Activated CD4-positive, alpha-beta memory T cell treated with anti-CD3 and anti-CD28 coated beads, Interleukin-2, amount 10 ng/mL, durations not matched to agents 7 days and 5 days (primary cell): ENCODE measurements at regions of chr16 and their contacts with region 1.

Region 1: DNA sequence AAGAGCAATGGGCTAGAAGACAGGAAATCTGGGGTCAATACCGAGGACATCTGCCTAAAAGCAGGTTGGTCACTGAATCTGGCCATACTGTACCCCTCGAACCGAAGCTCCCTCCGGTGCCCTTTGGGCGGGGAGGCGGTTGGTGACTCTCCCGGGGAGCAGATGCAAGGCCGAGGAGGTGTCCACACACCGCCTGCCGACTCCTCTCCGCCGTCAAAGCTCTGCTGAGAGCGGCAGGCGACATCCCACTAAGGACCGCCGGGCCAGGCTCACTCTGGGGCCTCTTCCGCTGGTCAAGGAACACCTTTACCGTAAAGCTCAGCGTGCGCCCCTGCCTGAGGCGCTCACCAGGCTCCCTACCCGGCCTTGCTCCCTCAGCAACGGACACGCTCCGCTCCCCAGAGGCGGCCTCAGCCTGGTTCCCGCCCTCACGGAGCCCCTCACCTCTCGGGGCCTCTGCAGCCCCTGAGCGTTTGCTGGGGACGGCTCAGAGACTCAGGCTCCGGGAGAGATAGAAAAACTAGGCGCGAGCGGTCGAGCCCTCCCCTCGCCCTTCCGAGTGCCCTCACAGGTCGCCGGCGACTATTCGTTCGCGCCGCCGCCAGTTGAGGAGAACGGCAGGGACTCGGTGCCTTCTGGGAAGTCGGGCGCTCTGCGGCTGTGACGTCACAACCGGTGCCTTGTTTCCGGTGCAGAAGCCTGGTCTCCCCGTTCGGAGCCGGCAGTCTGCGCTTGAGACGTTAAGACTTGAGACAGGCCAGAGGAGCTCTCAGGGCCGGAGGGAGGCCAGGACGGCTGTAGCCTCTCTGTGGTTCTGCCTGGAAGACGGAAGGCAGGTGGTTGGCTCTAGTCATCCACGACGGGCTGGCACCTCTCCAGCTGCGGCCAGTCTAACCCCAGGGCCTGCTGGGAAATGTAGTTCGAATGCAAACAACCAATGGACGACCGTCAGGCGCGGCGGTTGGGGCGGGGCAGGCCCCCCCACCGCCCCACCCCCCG is at the start of gene ZNF200:
- DNase-seq: peak; percentile 95
- H3K4me3 Mint-ChIP-seq: peak within 1 kb of the TSS; percentile 83
- H3K27ac Mint-ChIP-seq: peak within 1 kb of the TSS; percentile 97
- H3K4me1 Mint-ChIP-seq: peaks cover 31% of the 10 kb centered on the region
- H3K27me3 Mint-ChIP-seq: no peaks in the 10 kb centered on the region
- total RNA-seq, gene ZNF200: 13.1 to 14.9 TPM

Region 2: DNA sequence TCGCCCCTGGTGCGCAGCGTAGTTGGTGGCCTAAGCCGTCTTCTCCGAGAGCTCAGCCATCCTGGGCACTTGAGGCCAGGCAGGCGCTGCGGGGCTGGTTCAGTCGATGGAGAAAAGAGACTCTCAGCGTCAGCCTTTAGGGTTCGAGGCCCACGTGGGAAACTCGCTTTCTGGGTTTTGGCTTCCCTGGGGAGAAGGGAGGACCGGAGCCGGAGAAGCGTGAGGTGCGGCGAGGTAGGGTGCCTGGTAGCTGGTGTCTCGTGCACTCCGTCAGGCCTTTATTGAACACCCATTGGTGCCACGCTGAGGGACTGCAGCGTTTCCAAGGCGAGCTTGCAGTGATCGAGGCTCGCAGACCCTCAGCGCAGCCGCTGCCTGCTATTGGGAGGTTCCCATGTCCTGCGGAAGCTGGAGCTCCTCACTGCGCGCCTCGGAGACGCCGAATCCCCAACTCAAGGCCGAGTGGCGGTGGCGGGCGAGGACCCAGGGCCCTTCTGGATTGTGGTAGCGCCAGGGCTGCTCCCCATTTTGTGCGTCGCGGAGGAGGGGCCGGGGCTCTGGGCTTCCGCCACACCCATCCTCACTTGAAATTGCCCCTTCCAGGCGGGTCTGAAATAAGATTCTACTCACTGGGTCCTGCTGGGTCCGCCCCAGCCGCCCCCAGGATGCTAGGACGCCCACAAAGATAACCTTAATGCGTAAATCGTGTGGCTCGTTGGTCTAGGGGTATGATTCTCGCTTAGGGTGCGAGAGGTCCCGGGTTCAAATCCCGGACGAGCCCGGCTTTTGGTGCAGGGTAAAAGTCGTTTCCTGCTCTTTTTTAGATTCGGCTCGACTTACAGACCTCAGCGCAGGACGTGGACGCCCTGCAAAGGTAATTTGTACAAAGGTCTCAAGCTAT is 45.7 kb before region 1 on chr16:
- CTCF ChIA-PET with region 1: interaction called, 3 read pairs
- POLR2A ChIA-PET with region 1: interaction called, 10 read pairs
- DNase-seq: peak; percentile 60
- H3K4me3 Mint-ChIP-seq: peak overlapping the region; percentile 71
- H3K27ac Mint-ChIP-seq: peak overlapping the region; percentile 78
- H3K4me1 Mint-ChIP-seq: peaks cover 50% of the 10 kb centered on the region
- H3K27me3 Mint-ChIP-seq: peaks cover 64% of the 10 kb centered on the region

Region 3: GRCh38 chr16:3214904-3215600 is 19.8 kb before region 1 on chr16:
- CTCF ChIA-PET with region 1: no interaction called
- POLR2A ChIA-PET with region 1: interaction called, 17 read pairs
- DNase-seq: peak; percentile 61
- H3K4me3 Mint-ChIP-seq: peak overlapping the region; percentile 35
- H3K27ac Mint-ChIP-seq: peak overlapping the region; percentile 99
- H3K4me1 Mint-ChIP-seq: peaks cover 35% of the 10 kb centered on the region
- H3K27me3 Mint-ChIP-seq: no peaks in the 10 kb centered on the region

Region 4: DNA sequence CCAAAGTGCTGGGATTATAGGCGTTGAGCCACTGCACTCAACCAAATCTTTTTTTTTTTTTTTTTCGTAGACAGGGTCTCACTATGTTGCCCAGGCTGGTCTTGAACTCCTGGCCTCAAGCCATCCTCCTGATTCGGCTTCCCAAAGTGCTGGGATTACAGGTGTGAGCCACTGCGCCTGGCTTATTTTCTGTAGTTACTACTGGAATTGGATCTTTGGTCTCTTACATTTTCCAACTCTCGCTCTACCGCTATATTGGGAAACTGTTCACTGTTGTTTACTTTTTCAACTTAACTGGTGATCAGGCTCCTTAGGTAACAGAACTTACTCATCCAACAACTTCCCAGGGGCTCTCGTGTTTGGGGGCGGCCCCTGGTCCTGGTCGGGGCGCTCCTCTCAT is 14.0 kb before region 1 on chr16:
- CTCF ChIA-PET with region 1: no interaction called
- POLR2A ChIA-PET with region 1: interaction called, 17 read pairs
- DNase-seq: no peak
- H3K4me3 Mint-ChIP-seq: no peak overlapping the region
- H3K27ac Mint-ChIP-seq: no peak overlapping the region
- H3K4me1 Mint-ChIP-seq: peaks cover 17% of the 10 kb centered on the region
- H3K27me3 Mint-ChIP-seq: no peaks in the 10 kb centered on the region

Region 5: DNA sequence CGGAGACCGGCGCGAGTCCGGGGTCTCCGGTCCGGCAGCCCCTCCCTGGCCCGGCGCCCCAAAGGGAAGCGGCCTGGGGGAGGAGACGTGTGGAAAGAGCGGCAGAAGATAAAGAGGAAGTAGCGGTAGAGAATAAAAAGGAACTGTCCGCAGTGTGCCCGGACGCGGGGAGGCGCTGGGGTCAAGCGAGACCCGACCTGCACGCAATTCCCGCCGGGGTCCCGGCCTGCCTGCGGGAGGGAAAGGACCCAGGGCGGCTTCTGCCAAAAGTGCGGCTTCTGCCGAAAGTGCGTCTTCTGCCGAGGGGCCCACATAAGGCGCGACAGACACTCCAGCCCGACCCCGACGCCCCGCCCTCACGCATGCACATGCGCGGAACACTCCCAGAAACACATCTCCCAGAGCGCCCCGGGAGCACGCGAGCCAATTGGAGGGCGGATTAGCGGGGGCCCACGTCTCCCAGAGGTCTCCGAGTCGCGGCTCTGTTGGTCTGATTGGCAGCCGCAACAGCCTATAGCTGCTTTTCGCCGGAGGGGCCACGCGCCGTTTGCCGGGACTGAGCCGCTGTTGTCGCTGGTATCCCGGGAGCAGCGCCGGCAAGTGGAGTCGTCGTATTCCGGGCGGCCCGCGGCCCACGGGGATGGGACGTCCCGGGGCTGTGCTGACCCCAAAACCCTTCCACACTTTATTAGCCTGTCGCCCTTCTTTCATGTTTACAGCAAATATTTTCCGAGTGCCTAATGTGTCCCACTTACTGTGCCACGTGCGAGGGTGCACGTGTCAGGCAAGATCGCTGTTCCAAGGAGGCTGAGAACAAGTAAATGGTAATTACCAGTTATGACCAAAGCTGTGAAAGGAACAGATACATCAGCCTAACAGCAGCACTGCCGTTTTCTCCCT is 29.5 kb after region 1 on chr16:
- CTCF ChIA-PET with region 1: no interaction called
- POLR2A ChIA-PET with region 1: interaction called, 28 read pairs
- DNase-seq: peak; percentile 96
- H3K4me3 Mint-ChIP-seq: peak overlapping the region; percentile 80
- H3K27ac Mint-ChIP-seq: peak overlapping the region; percentile 97
- H3K4me1 Mint-ChIP-seq: peaks cover 30% of the 10 kb centered on the region
- H3K27me3 Mint-ChIP-seq: no peaks in the 10 kb centered on the region